Activated naive CD4-positive, alpha-beta T cell treated with anti-CD3 and anti-CD28 coated beads for 36 hours (primary cell): ENCODE measurements at regions of chr11 and their contacts with region 1.

Region 1: DNA sequence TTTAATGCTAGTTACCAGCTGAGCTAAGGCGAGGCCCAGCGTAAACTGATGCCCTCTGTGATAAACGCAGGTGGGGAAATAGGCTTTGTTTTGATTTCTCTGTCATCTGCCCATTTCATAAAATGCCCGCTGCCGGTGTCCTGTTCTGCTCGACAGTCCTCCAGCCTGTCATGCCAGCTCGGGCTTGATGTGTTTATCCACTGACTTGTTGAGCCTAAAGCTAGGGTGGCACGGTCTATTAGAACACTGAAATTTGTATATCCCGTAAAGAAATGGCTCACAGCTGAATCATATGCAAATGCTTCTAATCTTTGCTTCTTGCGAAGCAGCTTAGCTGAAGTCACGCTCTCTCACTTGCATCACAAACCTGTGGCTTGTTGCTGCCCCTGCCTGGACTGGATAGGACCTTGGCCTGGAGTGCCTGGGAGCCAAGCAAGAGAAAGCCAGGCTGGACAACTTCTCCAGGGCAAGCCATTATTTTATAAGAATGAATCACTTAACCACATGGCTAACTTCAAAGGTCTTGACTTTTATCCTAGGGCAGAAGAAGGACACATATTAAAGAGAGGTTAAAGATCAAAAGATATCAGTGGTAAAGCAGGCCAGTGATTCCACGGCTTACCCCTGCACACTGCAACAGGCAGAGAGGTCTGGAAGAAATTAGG is 33.1 kb downstream of the EHF start:
- DNase-seq: peak; percentile 59
- H3K4me3 Mint-ChIP-seq: no peak overlapping the region
- H3K27ac Mint-ChIP-seq: no peak overlapping the region
- H3K4me1 Mint-ChIP-seq: peaks cover 43% of the 10 kb centered on the region
- H3K27me3 Mint-ChIP-seq: peaks cover 31% of the 10 kb centered on the region

Region 2: GRCh38 chr11:33893711-33894397 is 760.1 kb before region 1 on chr11:
- CTCF ChIA-PET with region 1: no interaction called
- intact Hi-C with region 1: loop called (anchors 1 kb)
- DNase-seq: peak; percentile 87
- H3K4me3 Mint-ChIP-seq: peak overlapping the region; percentile 57
- H3K27ac Mint-ChIP-seq: peak overlapping the region; percentile 33
- H3K4me1 Mint-ChIP-seq: peaks cover 47% of the 10 kb centered on the region
- H3K27me3 Mint-ChIP-seq: peaks cover 47% of the 10 kb centered on the region

Region 3: DNA sequence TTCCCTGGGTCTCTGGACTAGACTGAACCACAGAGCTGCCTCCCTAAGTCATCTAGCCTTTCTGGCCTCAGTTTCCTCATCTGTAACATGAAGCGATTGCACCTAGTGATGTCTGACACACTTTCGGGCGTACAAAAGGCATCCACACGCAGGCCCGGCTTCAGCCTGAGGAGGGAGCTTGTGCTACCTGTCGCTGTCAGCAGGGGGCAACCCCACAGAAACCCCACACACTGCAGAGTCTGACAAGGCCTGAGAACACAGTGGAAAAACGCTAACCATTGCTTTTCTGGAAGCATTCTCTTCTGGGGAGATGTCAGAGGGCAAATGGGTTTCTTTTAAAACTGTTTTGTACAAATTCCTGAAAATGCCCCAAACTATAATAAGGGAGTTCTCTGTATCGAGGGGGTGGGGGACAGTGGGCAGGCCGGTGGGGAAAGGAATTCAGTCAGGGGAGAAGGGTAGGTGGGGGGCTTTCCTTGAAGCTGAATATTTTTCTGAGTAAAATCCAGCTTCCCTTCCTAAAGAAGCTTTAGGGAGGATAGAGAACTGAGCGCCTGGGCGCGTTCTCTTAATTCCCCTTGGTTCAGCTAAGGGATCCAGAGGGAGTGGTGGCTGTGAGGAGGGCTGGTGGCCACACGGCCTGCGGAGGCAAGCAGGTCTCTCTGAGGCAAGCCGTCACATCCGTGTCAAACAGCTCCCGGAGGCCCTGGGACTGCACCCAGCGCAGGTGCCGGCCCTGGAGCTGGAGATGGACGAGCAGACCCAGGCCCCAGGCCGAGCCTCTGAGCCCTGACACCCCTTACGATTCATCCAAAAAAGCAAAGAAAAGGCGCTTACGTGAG is 140.9 kb before region 1 on chr11:
- CTCF ChIA-PET with region 1: no interaction called
- intact Hi-C with region 1: loop called (anchors 5 kb)
- DNase-seq: peak; percentile 74
- H3K4me3 Mint-ChIP-seq: no peak overlapping the region
- H3K27ac Mint-ChIP-seq: no peak overlapping the region
- H3K4me1 Mint-ChIP-seq: no peaks in the 10 kb centered on the region
- H3K27me3 Mint-ChIP-seq: no peaks in the 10 kb centered on the region

Region 4: DNA sequence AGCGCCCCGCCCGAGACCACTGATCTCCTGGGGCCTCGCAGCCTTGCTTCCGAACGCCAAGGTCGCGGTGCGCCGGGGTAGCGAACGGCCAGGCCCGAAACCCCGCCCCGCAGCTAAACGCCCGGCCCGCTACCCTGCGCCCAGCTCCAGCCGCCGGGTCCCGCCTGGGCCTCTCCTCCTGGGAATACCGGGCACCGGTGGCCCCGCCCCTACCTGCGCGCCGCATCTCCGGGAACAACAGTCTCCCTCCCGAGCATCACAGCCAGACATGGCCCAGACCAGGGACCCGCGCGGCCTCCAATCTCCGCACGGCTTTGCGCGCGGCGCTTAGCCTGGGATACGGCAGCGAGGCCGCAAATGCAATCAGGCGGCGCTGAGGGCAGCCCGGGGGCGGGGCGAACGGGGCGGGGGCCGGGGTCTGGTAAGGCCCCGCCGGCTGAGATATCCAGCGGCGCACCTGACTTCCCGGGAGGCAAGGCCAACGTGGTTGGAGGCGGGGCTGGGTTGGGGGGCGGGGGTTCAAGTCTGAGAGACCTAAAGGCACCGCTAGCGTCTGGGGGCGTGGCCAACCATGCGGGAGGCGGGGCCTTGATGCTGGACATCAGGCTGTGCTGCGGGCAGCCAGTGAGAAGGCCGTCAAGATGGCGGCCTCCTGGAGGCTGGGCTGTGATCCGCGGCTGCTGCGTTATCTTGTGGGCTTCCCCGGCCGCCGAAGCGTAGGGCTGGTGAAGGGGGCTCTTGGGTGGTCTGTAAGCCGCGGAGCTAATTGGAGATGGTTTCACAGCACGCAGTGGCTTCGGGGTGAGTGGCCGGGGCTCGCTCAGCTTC is 262.3 kb after region 1 on chr11 and contains the starts of genes APIP and PDHX:
- CTCF ChIA-PET with region 1: no interaction called
- intact Hi-C with region 1: loop called (anchors 1 kb)
- DNase-seq: peak; percentile 98
- H3K4me3 Mint-ChIP-seq: peak within 1 kb of the TSS; percentile 99
- H3K27ac Mint-ChIP-seq: peak within 1 kb of the TSS; percentile 96
- H3K4me1 Mint-ChIP-seq: peaks cover 44% of the 10 kb centered on the region
- H3K27me3 Mint-ChIP-seq: no peaks in the 10 kb centered on the region
- total RNA-seq, gene APIP: 42.4 to 42.5 TPM
- total RNA-seq, gene PDHX: 38.2 to 40.9 TPM

Region 5: DNA sequence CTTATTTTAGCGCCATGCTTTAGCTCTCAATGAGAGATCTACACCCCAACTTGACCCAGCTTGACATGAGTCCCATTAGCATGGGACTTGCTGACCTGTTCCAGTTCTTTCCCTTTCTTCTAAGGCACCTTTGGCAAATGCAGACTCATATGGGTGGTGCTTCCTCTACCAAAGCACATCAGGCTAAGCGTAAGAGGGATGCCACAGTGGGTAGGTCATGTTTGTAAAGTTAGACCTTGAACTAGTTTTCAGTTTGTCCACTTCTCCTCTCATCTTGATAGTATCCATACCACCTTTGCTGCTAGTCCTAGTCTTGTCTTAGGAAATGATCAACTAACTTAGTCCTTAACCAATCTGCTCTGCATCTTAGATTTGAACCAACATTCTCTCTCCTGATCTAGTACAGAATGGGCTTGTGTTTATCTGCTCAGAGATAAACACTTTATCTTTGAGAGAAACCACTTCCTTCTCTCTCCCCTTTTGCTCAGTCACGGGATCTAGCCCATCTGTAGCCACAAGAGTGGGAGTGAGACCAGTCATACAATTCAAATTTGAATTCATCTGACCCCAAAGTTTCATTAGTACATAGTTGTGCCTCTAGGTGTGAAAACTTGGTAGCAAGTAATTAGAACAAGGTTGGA is 412.9 kb after region 1 on chr11:
- CTCF ChIA-PET with region 1: no interaction called
- intact Hi-C with region 1: no loop called
- DNase-seq: peak; percentile 65
- H3K4me3 Mint-ChIP-seq: no peak overlapping the region
- H3K27ac Mint-ChIP-seq: peak overlapping the region; percentile 15
- H3K4me1 Mint-ChIP-seq: peaks cover 29% of the 10 kb centered on the region
- H3K27me3 Mint-ChIP-seq: no peaks in the 10 kb centered on the region

Region 6: DNA sequence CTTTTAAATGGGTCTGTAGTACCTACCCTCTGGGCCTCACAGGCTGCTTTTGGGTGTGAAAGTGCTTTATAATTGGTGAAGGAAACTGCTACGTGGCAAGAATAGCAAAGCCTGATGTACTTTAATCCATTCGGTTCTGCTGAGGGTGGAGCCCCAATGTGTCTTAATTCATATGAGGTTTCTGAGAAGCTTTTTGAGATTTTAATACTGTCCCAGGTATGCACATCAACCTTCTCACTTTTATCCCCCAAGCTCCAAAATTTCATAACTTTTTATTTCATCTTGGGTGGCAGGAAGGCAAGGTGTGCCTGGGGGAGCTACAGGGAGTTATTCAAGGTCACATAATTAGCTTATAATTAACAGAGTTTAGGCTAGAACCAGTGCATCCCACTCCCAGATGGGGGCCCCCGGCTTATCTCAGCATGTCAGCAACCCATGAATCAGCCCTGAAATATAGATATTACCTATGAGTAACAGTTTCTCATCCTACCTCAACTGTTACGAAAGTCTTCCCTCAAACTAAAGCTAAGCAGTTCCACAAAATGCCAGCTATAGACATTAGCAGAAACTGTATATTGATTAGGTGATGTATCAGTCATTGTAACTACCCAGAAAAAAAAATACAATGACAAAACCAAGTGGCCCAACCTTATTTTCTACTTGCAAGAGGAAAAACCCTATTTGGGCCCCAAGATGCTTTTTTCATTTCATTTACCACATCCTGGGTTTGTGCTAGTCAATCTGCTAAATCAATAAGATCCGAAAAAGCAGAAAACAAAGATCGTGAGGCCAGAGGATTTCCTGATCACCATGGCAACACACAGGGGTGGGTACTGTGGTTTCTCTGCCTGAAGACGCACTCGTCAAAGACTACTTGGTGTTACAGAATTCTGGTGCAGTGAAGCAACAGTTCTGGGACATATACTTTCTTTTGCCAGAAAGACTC is 511.7 kb after region 1 on chr11:
- CTCF ChIA-PET with region 1: no interaction called
- intact Hi-C with region 1: loop called (anchors 1 kb)
- DNase-seq: peak; percentile 95
- H3K4me3 Mint-ChIP-seq: peak overlapping the region; percentile 65
- H3K27ac Mint-ChIP-seq: peak overlapping the region; percentile 98
- H3K4me1 Mint-ChIP-seq: peaks cover 99% of the 10 kb centered on the region
- H3K27me3 Mint-ChIP-seq: no peaks in the 10 kb centered on the region

Region 7: DNA sequence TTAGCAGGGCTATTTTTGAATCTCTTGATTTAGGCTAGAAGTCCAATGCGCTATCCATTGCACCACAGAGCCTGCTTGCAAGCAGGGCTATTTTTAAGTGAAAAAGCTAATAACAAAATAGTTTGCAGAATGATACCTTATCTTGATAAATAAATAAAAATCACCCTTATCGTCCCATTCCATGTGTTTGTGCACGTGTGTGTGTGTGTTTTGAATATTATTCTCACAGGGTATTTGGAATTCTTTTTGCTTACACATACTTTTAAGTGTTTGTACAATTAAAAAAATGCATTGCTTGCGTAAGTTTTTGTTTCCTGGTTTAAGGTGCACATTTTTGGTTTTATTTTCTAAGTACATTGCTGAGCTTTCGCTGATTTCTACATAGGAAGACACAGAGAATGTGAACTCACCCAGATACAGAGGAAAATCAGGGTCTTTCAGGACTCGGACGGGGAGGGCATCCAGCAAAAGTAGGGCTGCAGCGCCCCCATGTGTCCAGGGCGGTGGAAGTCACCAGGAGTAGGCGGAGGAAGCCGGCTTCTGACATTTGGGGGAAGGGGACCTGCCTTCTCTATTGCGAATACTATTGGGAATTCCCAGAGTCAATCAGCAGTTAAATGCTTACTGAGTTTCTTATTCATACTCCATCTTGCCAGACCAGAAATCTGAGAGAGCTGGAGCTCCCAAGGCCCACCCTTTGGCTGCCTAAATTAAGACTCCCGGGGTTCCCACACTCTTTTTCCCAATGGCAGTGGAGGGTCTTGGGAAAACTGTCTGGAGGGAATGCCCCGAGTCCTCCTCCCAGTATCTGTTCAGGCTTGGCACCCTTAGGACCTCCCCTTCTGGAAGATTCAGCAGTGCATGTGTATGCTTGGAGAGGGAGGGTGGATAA is 738.2 kb after region 1 on chr11:
- CTCF ChIA-PET with region 1: no interaction called
- intact Hi-C with region 1: loop called (anchors 1 kb)
- DNase-seq: peak; percentile 93
- H3K4me3 Mint-ChIP-seq: peak overlapping the region; percentile 17
- H3K27ac Mint-ChIP-seq: no peak overlapping the region
- H3K4me1 Mint-ChIP-seq: peaks cover 39% of the 10 kb centered on the region
- H3K27me3 Mint-ChIP-seq: no peaks in the 10 kb centered on the region